K562 (cell line): ENCODE measurements at regions of chr10 and their contacts with region 1.

Region 1: DNA sequence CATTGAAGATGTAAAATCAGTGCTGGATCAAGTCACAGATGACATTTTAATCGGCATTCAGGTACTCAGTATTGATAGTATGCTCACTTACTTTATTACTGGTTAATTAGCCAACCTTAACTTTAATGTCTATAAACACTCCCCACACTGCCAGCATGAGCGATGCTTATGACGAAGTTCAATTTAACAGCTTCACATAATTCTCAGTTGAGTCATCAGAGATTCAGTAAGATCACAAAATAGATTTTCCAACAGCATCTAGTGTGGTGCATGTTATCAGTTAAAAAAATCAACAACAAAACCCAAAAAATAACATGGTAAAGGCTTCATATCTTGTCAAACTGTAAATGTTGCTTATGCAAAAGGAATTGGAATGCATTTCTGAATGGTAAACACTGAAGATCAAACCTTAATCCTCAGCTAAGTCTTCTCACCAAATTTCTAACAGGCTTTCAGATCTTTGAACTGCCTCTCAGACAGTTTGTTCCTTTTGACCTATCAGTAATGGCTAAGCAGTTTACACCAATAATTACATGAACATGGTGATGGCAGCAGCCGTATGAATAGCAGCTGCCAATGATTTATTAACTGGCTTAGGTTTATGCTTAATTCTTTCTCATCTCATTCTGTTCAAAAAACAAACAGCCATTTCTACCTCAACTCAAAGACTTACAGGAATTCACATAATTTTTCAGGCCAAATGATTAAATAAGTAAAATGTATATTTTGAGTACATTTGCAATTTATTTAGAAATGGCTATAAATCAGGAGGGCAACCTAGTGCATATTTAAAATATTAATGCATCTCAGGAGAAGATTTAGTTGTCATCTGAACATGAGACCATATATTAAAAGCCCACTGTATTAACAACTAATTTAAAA is 98.5 kb downstream of the CABCOCO1 start:
- DNase-seq: peak in 1 of 4 experiments; percentile 41
- ATAC-seq: no peak
- H3K4me3 ChIP-seq: no peak overlapping the region
- H3K27ac ChIP-seq: peak overlapping the region; percentile 43
- H3K4me1 ChIP-seq: peaks cover 0 to 70% of the 10 kb centered on the region in 2 experiments; a peak in 4 of 5 replicates
- H3K27me3 ChIP-seq: no peaks in the 10 kb centered on the region; a peak in 1 of 5 replicates
- CTCF ChIP-seq: no peak
- EP300 ChIP-seq: no peak
- POLR2A ChIP-seq: no peak
- RAD21 ChIP-seq: 0 out of 4 replicates have a peak, but pooled peaks of 1 of the 2 experiments have one; percentile 6

Region 2: DNA sequence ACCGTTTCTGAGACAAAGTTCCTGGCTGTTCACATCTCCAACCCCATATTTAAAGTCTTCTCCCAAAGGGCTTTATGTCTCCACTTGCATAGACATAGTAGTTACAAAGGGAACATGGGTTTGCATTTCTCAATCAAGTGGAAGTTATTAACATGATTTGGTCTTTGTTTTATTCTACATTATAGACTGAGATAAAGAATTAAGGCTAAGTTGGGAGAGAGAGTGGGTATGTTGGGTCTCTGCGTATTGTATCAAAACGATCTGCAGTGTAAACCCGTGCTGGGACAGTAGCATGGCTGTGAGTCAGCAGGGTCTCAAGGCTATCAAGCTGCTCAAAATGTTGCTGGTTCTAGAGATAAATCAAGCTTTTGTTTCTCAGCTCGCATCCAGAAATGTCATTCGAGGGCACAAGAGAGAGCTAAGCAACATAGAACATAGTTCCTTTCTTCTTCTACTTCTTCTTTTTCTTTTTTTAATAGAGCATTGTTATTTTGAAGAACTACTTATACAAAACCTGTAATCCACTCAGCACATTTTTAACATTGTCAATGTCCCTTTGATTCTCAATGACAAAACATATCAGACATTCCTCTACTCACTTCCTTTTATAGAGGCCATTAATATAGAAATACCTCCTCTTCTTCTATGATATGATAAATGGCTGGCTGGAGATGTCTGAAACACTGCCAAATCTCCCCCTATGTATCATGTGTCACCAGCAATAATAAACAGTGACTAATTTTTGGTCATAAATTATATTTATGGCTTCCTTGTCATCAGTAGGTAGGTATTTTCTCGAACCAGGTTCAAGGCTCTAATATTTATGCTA is 782.7 kb before region 1 on chr10:
- CTCF ChIA-PET with region 1: no interaction called
- POLR2A ChIA-PET with region 1: no interaction called
- in situ Hi-C with region 1: no loop called
- intact Hi-C with region 1: loop called (anchors 5 kb)
- DNase-seq: peak; percentile 25 to 94 (median 60)
- ATAC-seq: peak; percentile 95
- H3K4me3 ChIP-seq: no peak overlapping the region
- H3K27ac ChIP-seq: peak overlapping the region; percentile 77
- H3K4me1 ChIP-seq: peaks cover 14 to 59% of the 10 kb centered on the region in 2 experiments
- H3K27me3 ChIP-seq: no peaks in the 10 kb centered on the region
- CTCF ChIP-seq: no peak
- EP300 ChIP-seq: peak; percentile 98
- POLR2A ChIP-seq: no peak; the same call in 1 of the 2 replicates
- RAD21 ChIP-seq: no peak; a peak in 1 of 4 replicates

Region 3: GRCh38 chr10:61744469-61744868 is 16.7 kb before region 1 on chr10:
- CTCF ChIA-PET with region 1: interaction called, 4 read pairs
- POLR2A ChIA-PET with region 1: interaction called, 43 read pairs
- in situ Hi-C with region 1: no loop called
- intact Hi-C with region 1: no loop called
- DNase-seq: peak in 3 of 4 experiments; percentile 35 to 52 (median 46)
- ATAC-seq: peak; percentile 80
- H3K4me3 ChIP-seq: no peak overlapping the region
- H3K27ac ChIP-seq: no peak overlapping the region
- H3K4me1 ChIP-seq: peaks cover 0 to 5% of the 10 kb centered on the region in 2 experiments; a peak in 2 of 5 replicates
- H3K27me3 ChIP-seq: no peaks in the 10 kb centered on the region
- CTCF ChIP-seq: peak; percentile 40 to 68 (median 47)
- EP300 ChIP-seq: no peak
- POLR2A ChIP-seq: no peak
- RAD21 ChIP-seq: peak in 1 of 2 experiments; percentile 61; a peak in 2 of 4 replicates

Region 4: GRCh38 chr10:61750929-61751471 is 10.2 kb before region 1 on chr10:
- CTCF ChIA-PET with region 1: no interaction called
- POLR2A ChIA-PET with region 1: interaction called, 43 read pairs
- in situ Hi-C with region 1: no loop called
- intact Hi-C with region 1: loop called (anchors 1 kb)
- DNase-seq: peak; percentile 80 to 93 (median 86)
- ATAC-seq: peak; percentile 97
- H3K4me3 ChIP-seq: no peak overlapping the region
- H3K27ac ChIP-seq: peak overlapping the region; percentile 66; the same call in 2 of the 3 replicates
- H3K4me1 ChIP-seq: peaks cover 4 to 36% of the 10 kb centered on the region in 2 experiments; a peak in 3 of 5 replicates
- H3K27me3 ChIP-seq: no peaks in the 10 kb centered on the region
- CTCF ChIP-seq: peak; percentile 92 to 97 (median 94)
- EP300 ChIP-seq: peak; percentile 34; the same call in 1 of the 2 replicates
- POLR2A ChIP-seq: no peak
- RAD21 ChIP-seq: peak; percentile 79 to 92

Region 5: DNA sequence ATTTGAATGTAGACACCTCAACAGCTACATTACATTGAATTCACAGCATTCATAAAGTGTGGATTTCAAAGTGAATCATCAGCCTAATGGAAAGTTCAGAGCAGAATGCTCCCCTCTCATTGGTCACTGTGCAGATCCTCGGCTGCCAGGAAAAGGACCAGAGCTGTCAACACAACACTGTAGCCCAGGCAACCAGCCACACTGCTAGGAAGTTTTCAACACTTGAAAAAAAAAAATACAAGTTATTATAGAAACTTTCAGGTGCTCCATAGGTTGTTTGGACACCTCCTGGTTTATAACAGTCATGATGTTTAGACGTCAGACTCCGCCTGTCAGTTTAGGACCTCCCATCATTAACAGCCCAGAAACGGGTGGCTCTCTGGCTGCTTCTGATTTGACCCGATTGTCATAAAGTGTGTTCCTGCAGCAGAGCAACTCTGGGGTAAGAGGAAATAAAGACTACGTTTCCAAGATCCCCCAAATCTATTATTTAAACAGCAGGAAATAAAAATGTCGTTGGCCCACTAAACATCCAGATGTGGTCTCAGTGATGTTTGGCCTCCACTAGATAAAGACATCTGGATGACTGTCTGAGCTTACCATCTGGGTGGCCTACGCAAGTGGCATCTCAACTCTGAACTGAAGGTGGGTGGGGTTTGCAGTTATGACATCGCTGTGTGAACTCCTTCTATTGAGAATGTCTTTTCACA is 18.9 kb after region 1 on chr10:
- CTCF ChIA-PET with region 1: no interaction called
- POLR2A ChIA-PET with region 1: interaction called, 80 read pairs
- in situ Hi-C with region 1: no loop called
- intact Hi-C with region 1: loop called (anchors 1 kb)
- DNase-seq: peak; percentile 79 to 93 (median 80)
- ATAC-seq: peak; percentile 73
- H3K4me3 ChIP-seq: no peak overlapping the region
- H3K27ac ChIP-seq: peak overlapping the region; percentile 74
- H3K4me1 ChIP-seq: peaks cover 5 to 72% of the 10 kb centered on the region in 2 experiments
- H3K27me3 ChIP-seq: no peaks in the 10 kb centered on the region
- CTCF ChIP-seq: no peak
- EP300 ChIP-seq: peak; percentile 93
- POLR2A ChIP-seq: no peak; the same call in 1 of the 2 replicates
- RAD21 ChIP-seq: no peak

Region 6: DNA sequence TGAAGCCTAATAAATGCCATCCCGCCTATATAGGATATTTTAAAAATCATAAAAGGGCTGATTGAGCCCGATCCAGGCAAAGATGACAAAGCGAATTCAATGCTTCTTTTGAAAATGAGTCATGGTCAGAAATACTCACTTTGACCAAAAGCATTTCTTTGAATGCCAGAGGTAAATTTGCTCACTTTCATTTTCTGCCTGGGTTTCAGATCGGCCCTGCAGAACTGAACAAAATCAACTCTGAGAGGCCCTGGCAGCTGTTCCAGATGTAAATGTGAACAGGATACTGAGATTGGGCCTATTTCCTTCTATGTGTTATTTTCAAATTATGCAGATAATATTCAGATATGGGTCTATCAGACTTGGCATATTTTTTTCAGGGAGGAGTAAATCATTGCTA is 25.5 kb after region 1 on chr10:
- CTCF ChIA-PET with region 1: no interaction called
- POLR2A ChIA-PET with region 1: interaction called, 80 read pairs
- in situ Hi-C with region 1: no loop called
- intact Hi-C with region 1: no loop called
- DNase-seq: peak in 2 of 4 experiments; percentile 67 to 68
- ATAC-seq: peak; percentile 20
- H3K4me3 ChIP-seq: no peak overlapping the region
- H3K27ac ChIP-seq: peak overlapping the region; percentile 61; the same call in 2 of the 3 replicates
- H3K4me1 ChIP-seq: peaks cover 5 to 61% of the 10 kb centered on the region in 2 experiments
- H3K27me3 ChIP-seq: no peaks in the 10 kb centered on the region
- CTCF ChIP-seq: no peak
- EP300 ChIP-seq: peak; percentile 36; the same call in 1 of the 2 replicates
- POLR2A ChIP-seq: no peak
- RAD21 ChIP-seq: no peak

Region 7: GRCh38 chr10:61842755-61843497 is 81.7 kb after region 1 on chr10:
- CTCF ChIA-PET with region 1: no interaction called
- POLR2A ChIA-PET with region 1: no interaction called
- in situ Hi-C with region 1: no loop called
- intact Hi-C with region 1: no loop called
- DNase-seq: no peak
- ATAC-seq: no peak
- H3K4me3 ChIP-seq: no peak overlapping the region
- H3K27ac ChIP-seq: no peak overlapping the region
- H3K4me1 ChIP-seq: peaks cover 3 to 32% of the 10 kb centered on the region in 2 experiments; a peak in 3 of 5 replicates
- H3K27me3 ChIP-seq: no peaks in the 10 kb centered on the region
- CTCF ChIP-seq: no peak
- EP300 ChIP-seq: no peak
- POLR2A ChIP-seq: no peak
- RAD21 ChIP-seq: no peak